PC-9 (cell line): ENCODE measurements at regions of chr4 and their contacts with region 1.

Region 1: DNA sequence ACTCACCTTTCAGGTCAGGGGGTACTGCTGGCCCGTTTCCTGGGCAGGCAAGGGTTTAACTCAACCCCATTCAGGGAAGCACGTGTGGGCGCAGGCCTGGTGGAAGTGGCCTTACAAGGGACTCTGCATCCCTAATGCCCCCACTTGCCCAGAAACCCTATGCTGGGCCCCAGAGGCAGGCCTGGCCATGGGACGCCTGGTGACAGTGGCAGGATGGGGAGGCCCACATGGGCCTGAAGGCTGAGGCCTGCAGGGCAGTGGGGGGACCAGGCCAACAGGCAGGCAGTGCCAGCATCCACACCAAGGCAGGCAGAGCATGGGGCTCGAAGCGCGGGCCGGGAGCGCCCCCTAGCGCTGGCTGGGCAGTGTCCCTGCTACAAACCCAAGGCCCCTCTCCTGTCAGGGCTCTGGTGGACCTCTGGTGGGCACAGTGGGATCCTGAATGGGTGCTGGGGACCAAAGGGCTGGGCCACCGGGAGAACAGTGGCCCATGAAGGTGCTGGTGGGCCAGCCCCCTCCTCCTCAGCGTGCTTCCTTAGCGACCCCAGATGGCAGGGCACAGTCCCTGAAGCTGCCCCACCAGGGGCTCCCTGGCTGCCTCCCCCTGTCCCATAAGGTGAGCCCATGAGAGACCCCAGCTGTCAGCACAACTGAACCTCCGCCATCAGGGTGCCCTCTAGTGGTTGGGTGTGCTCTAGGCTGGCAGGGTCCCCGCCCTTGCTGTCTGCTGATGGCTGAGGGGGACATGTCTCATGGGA is 16.8 kb downstream of the FGFR3 start:
- DNase-seq: peak; percentile 57 to 84
- H3K4me3 ChIP-seq: no peak overlapping the region
- H3K27ac ChIP-seq: no peak overlapping the region
- H3K4me1 ChIP-seq: no peaks in the 10 kb centered on the region
- H3K27me3 ChIP-seq: no peaks in the 10 kb centered on the region
- CTCF ChIP-seq: peak; percentile 96

Region 2: GRCh38 chr4:1693129-1693896 is 116.6 kb before region 1 on chr4:
- CTCF ChIA-PET with region 1: no interaction called
- POLR2A ChIA-PET with region 1: no interaction called
- intact Hi-C with region 1: loop called (anchors 1 kb)
- DNase-seq: peak; percentile 60 to 76
- H3K4me3 ChIP-seq: no peak overlapping the region
- H3K27ac ChIP-seq: no peak overlapping the region; the same call in 1 of the 2 replicates
- H3K4me1 ChIP-seq: no peaks in the 10 kb centered on the region
- H3K27me3 ChIP-seq: no peaks in the 10 kb centered on the region
- CTCF ChIP-seq: peak; percentile 93

Region 3: GRCh38 chr4:1748465-1748995 is 61.4 kb before region 1 on chr4:
- CTCF ChIA-PET with region 1: no interaction called
- POLR2A ChIA-PET with region 1: no interaction called
- intact Hi-C with region 1: loop called (anchors 1 kb)
- DNase-seq: peak in 1 of 2 experiments; percentile 84
- H3K4me3 ChIP-seq: no peak overlapping the region
- H3K27ac ChIP-seq: no peak overlapping the region
- H3K4me1 ChIP-seq: no peaks in the 10 kb centered on the region
- H3K27me3 ChIP-seq: no peaks in the 10 kb centered on the region
- CTCF ChIP-seq: peak; percentile 93